ENCODE measurements at regions of chr15 and their contacts with region 1.

Region 1: GRCh38 chr15:82530606-82531379 is 9.5 kb downstream of the RPS17 start:
- DNase-seq: peak; percentile 76
- H3K4me3 ChIP-seq: no peak overlapping the region
- H3K27ac ChIP-seq: no peak overlapping the region
- H3K4me1 ChIP-seq: peaks cover 11% of the 10 kb centered on the region
- CTCF ChIP-seq: peak; percentile 92

Region 2: GRCh38 chr15:82789491-82789890 is 258.7 kb after region 1 on chr15:
- CTCF ChIA-PET with region 1: interaction called, 15 read pairs
- POLR2A ChIA-PET with region 1: no interaction called
- intact Hi-C with region 1: no loop called
- DNase-seq: no peak
- H3K4me3 ChIP-seq: no peak overlapping the region
- H3K27ac ChIP-seq: no peak overlapping the region
- H3K4me1 ChIP-seq: no peaks in the 10 kb centered on the region
- CTCF ChIP-seq: no peak

Region 3: DNA sequence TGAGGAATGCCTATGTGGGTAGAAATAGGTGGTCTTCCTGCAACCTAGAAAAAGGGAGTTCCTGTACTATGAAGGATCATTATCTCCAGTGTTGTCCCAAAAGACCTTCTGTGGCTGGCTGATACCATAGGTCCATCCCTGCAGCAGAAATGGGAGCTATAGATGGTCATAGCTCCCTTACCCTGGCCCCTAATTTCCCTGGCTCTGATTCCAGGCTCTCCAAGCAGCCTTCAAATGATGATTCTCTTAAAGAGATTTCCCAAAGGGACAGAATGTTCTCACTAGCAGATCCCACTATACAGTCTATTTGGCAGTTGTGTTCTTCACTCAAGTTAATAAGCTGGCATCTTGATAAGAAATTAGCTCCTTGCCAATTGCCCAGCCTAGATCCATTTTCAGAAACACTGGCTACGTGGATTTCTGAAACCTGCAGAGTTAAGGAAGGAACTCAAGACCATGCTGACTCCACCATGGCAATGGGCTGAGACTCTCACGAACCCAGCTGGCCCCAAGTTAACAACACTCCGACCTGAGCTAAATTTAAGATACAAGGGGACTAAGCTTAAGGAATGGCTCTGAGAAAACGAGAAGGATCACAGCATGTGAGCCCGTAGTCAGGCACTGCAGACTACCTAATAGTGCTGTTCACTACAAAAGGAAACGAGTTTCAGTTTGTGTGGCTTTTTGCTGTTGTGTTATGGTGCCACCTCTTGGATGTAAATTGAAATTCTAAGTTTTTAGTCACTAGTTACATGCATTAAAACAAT is 469.3 kb after region 1 on chr15:
- CTCF ChIA-PET with region 1: no interaction called
- POLR2A ChIA-PET with region 1: no interaction called
- intact Hi-C with region 1: loop called (anchors 5 kb)
- DNase-seq: peak; percentile 70
- H3K4me3 ChIP-seq: peak overlapping the region; percentile 29
- H3K27ac ChIP-seq: no peak overlapping the region
- H3K4me1 ChIP-seq: peaks cover 8% of the 10 kb centered on the region
- CTCF ChIP-seq: peak; percentile 83